Activated CD8-positive, alpha-beta T cell treated with anti-CD3 and anti-CD28 coated beads for 36 hours (primary cell): ENCODE measurements at regions of chr1 and their contacts with region 1.

Region 1: DNA sequence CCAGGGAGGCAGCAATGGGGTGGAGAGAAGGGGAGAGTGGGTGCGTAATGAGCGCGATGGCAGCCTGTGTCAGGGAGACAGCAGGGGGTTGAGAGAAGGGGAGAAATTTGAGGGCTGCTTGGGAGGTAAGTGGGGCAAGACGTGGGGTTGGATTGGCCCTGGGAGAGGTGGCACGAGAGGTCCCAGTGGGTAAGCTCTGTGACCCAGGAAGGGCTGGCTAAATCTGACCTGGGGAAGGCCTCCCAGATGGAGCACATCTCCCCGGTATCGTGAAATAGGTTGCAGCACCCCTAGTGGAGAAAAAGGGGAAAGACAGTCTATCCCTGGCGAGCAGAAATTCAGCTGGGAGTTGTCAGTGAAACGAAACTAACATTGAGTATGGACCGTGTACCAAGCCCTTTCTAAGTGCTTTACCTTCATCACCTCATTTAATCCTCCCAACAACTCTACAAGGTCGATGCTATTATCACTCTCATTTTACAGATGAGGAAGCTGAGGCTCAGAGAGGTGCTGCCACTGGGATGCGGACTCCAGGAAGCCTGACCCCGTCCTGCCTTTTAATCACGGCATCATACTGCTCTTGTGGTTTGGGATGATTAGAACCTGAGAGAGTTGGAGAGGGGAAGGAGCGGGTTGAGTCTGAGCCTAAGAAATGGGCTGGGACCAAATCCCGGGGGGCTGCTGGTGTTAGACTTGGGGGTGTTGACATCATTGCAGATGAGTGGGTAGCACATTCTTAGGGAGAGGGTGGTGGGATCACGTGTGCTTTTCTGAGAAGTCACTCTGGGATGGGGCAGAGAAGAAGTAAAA is 56.6 kb upstream of the RPL11 start:
- DNase-seq: peak; percentile 66
- ATAC-seq: peak; percentile 90
- H3K4me3 Mint-ChIP-seq: peak overlapping the region; percentile 51
- H3K27ac Mint-ChIP-seq: peak overlapping the region; percentile 85
- H3K4me1 Mint-ChIP-seq: peaks cover 28% of the 10 kb centered on the region
- H3K27me3 Mint-ChIP-seq: no peaks in the 10 kb centered on the region
- CTCF ChIP-seq: peak; percentile 84

Region 2: GRCh38 chr1:23524716-23525401 is 110.2 kb before region 1 on chr1:
- CTCF ChIA-PET with region 1: interaction called, 35 read pairs
- POLR2A ChIA-PET with region 1: interaction called, 4 read pairs
- intact Hi-C with region 1: no loop called
- DNase-seq: peak; percentile 42
- ATAC-seq: peak; percentile 12
- H3K4me3 Mint-ChIP-seq: no peak overlapping the region
- H3K27ac Mint-ChIP-seq: no peak overlapping the region
- H3K4me1 Mint-ChIP-seq: peaks cover 59% of the 10 kb centered on the region
- H3K27me3 Mint-ChIP-seq: no peaks in the 10 kb centered on the region
- CTCF ChIP-seq: no peak

Region 3: GRCh38 chr1:23559136-23559984 is 75.7 kb before region 1 on chr1 and contains the start of gene ID3:
- CTCF ChIA-PET with region 1: interaction called, 927 read pairs
- POLR2A ChIA-PET with region 1: interaction called, 29 read pairs
- intact Hi-C with region 1: no loop called
- DNase-seq: peak; percentile 98
- ATAC-seq: peak; percentile 71
- H3K4me3 Mint-ChIP-seq: peak within 1 kb of the TSS; percentile 89
- H3K27ac Mint-ChIP-seq: peak within 1 kb of the TSS; percentile 80
- H3K4me1 Mint-ChIP-seq: peaks cover 55% of the 10 kb centered on the region
- H3K27me3 Mint-ChIP-seq: peaks cover 3% of the 10 kb centered on the region
- CTCF ChIP-seq: no peak
- total RNA-seq, gene ID3: 70.4 to 74.3 TPM

Region 4: DNA sequence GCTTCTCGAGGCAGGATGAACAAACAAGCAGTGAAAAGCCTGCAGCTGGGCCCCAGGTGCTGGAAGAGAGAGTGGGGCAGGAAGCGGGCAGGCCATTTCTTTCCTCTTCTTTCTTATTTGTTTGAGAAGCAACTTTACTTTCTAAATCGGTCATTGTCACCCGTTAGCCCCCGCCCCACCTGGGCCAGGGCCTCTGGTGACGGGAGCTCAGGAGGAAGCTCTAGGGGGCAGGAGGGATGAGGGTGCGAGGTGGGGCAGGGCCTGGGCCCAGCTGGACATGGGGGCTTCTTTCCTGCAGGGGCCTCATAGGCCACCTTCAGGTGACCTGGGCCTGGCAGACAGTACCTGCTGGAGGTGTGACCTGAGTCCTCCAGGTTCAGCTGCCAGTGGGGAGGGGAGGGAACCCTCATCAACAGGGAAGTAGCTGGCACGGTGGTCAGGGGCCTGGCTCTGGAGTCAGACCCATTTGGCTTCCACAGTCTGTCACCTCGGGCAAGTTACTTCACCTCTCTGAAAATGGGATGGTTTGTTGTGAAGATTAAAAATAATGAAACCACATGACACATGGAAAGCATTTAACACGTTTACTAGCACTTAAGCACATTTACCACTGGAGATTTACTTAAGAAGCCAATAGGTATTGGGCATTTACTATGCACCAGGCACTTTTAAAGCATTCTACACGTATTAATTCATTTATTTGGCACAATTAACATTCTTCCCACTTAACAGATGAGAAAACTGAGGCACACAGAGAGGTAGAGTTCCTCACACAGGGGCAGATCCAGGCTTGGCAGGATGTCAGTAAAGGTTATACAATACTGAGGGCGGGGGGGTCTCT is 21.6 kb before region 1 on chr1:
- CTCF ChIA-PET with region 1: interaction called, 32 read pairs
- POLR2A ChIA-PET with region 1: interaction called, 3 read pairs
- intact Hi-C with region 1: no loop called
- DNase-seq: peak; percentile 85
- ATAC-seq: peak; percentile 63
- H3K4me3 Mint-ChIP-seq: peak overlapping the region; percentile 28
- H3K27ac Mint-ChIP-seq: peak overlapping the region; percentile 89
- H3K4me1 Mint-ChIP-seq: peaks cover 69% of the 10 kb centered on the region
- H3K27me3 Mint-ChIP-seq: no peaks in the 10 kb centered on the region
- CTCF ChIP-seq: no peak

Region 5: GRCh38 chr1:23657659-23658275 is 22.7 kb after region 1 on chr1:
- CTCF ChIA-PET with region 1: interaction called, 31 read pairs
- POLR2A ChIA-PET with region 1: interaction called, 5 read pairs
- intact Hi-C with region 1: no loop called
- DNase-seq: peak; percentile 74
- ATAC-seq: peak; percentile 92
- H3K4me3 Mint-ChIP-seq: no peak overlapping the region
- H3K27ac Mint-ChIP-seq: no peak overlapping the region
- H3K4me1 Mint-ChIP-seq: no peaks in the 10 kb centered on the region
- H3K27me3 Mint-ChIP-seq: no peaks in the 10 kb centered on the region
- CTCF ChIP-seq: peak; percentile 89